Posterior vena cava (tissue), 2 donors: ENCODE measurements at regions of chr11 and their contacts with region 1.

Region 1: GRCh38 chr11:121703201-121703600 is 250.4 kb upstream of the SORL1-AS1 start:
- DNase-seq: no peak

Region 2: DNA sequence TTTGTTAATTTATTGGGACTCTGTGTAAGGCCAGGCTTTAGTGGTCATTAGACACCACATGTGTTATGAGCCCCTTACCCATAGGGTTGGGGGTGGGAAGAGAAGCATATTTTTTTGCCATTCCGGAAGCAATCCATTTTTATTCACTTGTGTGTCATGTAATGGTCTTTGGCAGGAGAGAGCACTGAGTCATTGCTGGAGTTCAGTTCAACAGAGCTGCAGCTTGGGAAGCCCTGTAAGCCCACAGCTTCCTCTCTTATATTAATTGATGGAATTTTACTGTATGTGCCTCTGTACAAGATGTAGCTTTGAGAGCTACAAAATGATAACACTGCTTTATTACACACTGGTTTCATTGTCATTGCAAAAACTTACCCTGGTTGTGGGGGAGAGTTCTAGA is 73.2 kb before region 1 on chr11:
- intact Hi-C with region 1: loop called in 1 of 2 experiments (anchors 2 kb)
- DNase-seq: no peak